ENCODE measurements at regions of chr1 and their contacts with region 1.

Region 1: DNA sequence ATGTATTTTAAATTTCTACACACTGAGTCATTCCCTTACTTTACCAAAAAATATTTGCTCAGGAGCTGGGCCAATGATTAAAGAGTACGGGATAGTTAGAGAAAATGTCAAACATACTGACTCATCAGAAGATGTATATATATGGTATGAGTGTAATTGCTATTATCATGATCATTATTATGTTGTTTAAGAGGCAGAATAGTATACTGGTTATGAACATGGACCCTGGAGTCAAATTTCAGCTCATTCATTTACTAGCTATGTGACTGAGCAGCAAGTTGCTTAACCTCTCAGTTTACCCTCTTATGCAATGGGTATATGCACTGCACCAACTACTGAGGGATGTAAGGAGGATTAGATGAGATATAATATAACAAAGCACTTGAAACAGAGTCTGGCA is 41.2 kb upstream of the USH2A start:
- DNase-seq: peak; percentile 88
- H3K4me3 ChIP-seq: no peak overlapping the region
- H3K27me3 ChIP-seq: no peaks in the 10 kb centered on the region
- CTCF ChIP-seq: no peak

Region 2: DNA sequence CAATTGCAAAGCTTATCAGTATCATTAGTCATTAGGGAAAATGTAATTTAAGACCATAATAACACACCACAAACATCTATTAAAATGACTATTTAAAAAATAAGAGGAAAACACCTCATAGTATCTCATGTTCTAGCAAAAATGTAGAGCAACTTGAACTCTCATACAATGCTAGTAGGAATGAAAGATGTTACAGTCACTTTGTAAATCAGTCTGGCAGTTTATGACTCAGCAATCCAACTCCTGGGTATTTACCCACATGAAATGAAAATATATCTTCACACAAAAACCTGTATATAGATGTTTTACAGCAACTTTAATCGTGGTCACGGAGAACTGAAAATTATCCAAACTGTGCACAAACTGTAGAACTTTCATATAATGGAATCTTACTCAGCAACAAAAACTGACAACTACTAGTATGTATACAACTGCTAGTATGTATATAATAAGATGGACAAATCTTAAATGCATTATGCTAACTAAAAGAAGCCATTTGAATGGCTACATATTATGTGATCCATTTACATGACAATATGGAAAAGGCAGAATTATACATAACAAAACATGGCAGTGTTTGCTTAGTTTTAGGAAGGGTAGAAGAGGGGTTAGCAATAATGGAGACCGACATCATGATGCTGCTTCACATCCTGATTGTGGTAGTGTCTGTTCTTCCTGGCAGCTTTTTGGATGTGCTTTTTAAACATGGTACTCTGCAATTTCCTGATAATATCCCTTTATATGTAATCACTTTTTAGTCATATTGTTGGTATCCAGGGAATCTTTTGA is 630.4 kb before region 1 on chr1:
- CTCF ChIA-PET with region 1: no interaction called
- POLR2A ChIA-PET with region 1: interaction called, 16 read pairs
- DNase-seq: no peak
- H3K4me3 ChIP-seq: no peak overlapping the region
- H3K27me3 ChIP-seq: no peaks in the 10 kb centered on the region
- CTCF ChIP-seq: no peak

Measured in BJ (cell line).